Activated B cell treated with CpG ODN at 0.5 μM for 24 hours (primary cell): ENCODE measurements at regions of chr1 and their contacts with region 1.

Region 1: GRCh38 chr1:207336559-207337467 is 15.3 kb downstream of the CD55 start:
- DNase-seq: no peak
- ATAC-seq: peak; percentile 80
- H3K4me3 Mint-ChIP-seq: peak overlapping the region; percentile 73
- H3K27ac Mint-ChIP-seq: peak overlapping the region; percentile 98
- H3K4me1 Mint-ChIP-seq: peaks cover 82% of the 10 kb centered on the region
- H3K27me3 Mint-ChIP-seq: no peaks in the 10 kb centered on the region
- CTCF ChIP-seq: no peak

Region 2: DNA sequence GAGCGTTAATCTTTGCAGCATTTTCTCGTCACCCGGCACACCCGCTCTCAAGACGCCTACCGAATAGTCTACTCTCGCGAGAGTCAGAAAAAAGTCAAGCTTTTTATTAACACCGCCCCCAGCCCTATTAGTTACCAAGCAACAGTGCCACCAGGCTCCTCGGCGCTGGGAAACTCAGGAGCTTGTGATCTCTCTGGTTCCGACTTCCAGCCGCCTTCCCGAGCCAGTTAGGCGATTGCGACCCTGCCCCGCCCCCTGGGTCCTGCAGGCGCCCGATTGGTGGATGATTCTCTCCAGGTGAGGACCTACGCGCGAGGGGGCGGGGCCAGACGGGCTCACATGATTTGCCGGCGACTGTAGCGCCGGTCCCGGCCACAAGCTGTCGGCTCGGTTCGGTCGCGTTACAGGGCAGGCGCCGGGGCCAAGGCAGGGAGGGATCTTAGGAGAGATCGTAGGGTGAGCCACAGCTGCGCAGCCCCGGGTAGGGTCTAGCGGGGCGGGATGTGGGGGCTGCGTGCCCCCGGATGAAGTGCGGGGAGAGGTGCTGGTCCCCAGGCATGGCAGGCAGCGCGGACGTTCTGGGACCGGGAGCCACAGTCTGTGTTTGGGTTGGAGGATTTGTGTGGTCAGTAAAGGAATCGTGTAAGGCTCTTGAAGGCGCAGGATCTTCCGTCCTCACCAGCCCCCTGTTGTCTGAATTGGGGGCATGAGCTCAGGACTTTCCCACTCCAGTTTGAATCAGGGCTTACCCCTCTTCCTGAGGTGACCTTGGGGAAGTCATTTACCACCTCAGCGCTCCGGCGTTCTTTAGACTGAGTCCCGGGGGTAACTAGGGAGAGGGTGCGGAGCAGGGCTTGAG is 283.7 kb before region 1 on chr1 and contains the start of gene PFKFB2:
- CTCF ChIA-PET with region 1: no interaction called
- POLR2A ChIA-PET with region 1: no interaction called
- intact Hi-C with region 1: loop called (anchors 2 kb)
- DNase-seq: peak; percentile 94
- ATAC-seq: peak; percentile 86
- H3K4me3 Mint-ChIP-seq: peak within 1 kb of the TSS; percentile 98
- H3K27ac Mint-ChIP-seq: peak within 1 kb of the TSS; percentile 98
- H3K4me1 Mint-ChIP-seq: peaks cover 56% of the 10 kb centered on the region
- H3K27me3 Mint-ChIP-seq: no peaks in the 10 kb centered on the region
- CTCF ChIP-seq: no peak
- total RNA-seq, gene PFKFB2: 7.6 and 10.1 TPM in 2 replicates

Region 3: GRCh38 chr1:207115269-207115668 is 221.5 kb before region 1 on chr1:
- CTCF ChIA-PET with region 1: no interaction called
- POLR2A ChIA-PET with region 1: no interaction called
- intact Hi-C with region 1: no loop called
- DNase-seq: no peak
- ATAC-seq: no peak
- H3K4me3 Mint-ChIP-seq: no peak overlapping the region
- H3K27ac Mint-ChIP-seq: no peak overlapping the region
- H3K4me1 Mint-ChIP-seq: no peaks in the 10 kb centered on the region
- H3K27me3 Mint-ChIP-seq: peaks cover 2% of the 10 kb centered on the region
- CTCF ChIP-seq: no peak

Region 4: GRCh38 chr1:207309775-207310273 is 27.0 kb before region 1 on chr1:
- CTCF ChIA-PET with region 1: no interaction called
- POLR2A ChIA-PET with region 1: interaction called, 12 read pairs
- intact Hi-C with region 1: no loop called
- DNase-seq: no peak
- ATAC-seq: peak; percentile 67
- H3K4me3 Mint-ChIP-seq: peak overlapping the region; percentile 77
- H3K27ac Mint-ChIP-seq: peak overlapping the region; percentile 91
- H3K4me1 Mint-ChIP-seq: peaks cover 27% of the 10 kb centered on the region
- H3K27me3 Mint-ChIP-seq: no peaks in the 10 kb centered on the region
- CTCF ChIP-seq: no peak

Region 5: DNA sequence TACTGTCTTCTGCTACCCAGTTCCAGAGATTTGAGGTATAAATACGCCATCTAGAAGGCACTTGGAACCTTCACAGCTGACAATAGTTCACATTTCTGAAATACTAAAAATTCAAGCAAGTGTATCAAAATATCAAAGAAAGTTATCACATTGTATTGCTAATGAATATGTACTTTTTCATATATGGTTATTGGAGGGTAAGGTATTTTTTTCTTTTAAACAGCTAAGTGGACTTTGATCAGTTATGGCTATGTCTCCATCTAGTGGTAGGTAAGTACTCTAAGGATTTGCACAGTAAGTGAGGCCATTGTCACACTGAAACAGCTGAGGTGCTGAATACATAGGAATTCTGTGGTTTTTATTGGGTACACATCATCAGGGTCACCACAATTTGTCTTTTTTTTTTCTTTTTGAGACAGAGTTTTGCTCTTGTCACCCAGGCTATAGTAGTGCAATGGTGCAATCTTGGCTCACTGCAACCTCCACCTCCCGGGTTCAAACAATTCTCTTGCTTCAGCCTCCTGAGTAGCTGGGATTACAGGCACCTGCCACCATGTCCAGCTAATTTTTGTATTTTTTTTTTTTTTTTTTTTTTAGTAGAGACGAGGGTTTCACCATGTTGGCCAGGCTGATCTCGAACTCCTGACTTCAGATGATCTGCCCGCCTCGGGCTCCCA is 68.2 kb after region 1 on chr1:
- CTCF ChIA-PET with region 1: interaction called, 10 read pairs
- POLR2A ChIA-PET with region 1: no interaction called
- intact Hi-C with region 1: no loop called
- DNase-seq: no peak
- ATAC-seq: peak; percentile 80
- H3K4me3 Mint-ChIP-seq: no peak overlapping the region
- H3K27ac Mint-ChIP-seq: no peak overlapping the region
- H3K4me1 Mint-ChIP-seq: peaks cover 31% of the 10 kb centered on the region
- H3K27me3 Mint-ChIP-seq: no peaks in the 10 kb centered on the region
- CTCF ChIP-seq: peak; percentile 46

Region 6: DNA sequence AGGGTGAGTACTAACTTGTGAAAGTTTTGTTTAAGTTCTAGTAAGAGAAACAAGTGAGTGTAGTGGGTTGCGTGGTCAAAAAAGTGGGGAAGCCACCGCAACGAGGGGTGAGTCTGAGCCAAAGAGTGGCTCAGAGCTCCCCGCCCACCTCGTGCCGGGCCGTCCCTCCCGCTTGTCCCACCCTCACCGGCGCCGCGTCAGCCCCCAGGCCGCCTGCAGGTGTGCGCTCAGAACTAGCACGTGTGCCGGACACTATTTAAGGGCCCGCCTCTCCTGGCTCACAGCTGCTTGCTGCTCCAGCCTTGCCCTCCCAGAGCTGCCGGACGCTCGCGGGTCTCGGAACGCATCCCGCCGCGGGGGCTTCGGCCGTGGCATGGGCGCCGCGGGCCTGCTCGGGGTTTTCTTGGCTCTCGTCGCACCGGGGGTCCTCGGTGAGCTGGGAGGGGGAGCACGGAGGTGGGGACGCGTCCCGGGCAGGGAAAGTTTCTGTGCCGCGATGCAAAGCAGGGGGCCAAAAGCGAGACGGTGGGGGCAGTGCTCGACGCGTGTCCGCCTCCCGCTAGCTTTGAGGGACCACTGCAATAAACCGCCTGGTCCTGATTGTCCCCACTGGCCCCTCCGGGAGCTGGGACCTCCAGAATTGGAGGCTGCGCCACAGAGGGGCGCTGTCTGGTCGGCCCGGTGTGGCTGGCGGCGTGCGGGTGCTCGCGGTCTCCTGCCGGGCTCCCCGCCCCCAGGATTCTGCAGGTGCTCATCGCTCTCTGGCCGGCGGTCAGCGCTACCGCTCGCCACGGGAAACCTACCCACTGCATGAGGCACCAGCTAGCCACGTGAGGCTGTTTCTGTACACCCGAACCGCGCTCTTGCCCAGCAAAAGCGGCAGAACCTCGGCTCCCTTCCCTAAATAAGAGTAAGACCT is 117.5 kb after region 1 on chr1 and contains the start of gene CR2:
- CTCF ChIA-PET with region 1: interaction called, 4 read pairs
- POLR2A ChIA-PET with region 1: no interaction called
- intact Hi-C with region 1: loop called (anchors 2 kb)
- DNase-seq: peak; percentile 74
- ATAC-seq: peak; percentile 90
- H3K4me3 Mint-ChIP-seq: no peak within 1 kb of the TSS
- H3K27ac Mint-ChIP-seq: no peak within 1 kb of the TSS
- H3K4me1 Mint-ChIP-seq: peaks cover 4% of the 10 kb centered on the region
- H3K27me3 Mint-ChIP-seq: no peaks in the 10 kb centered on the region
- CTCF ChIP-seq: no peak
- total RNA-seq, gene CR2: 30.7 and 34.1 TPM in 2 replicates

Region 7: GRCh38 chr1:207519505-207520404 is 182.9 kb after region 1 on chr1:
- CTCF ChIA-PET with region 1: no interaction called
- POLR2A ChIA-PET with region 1: no interaction called
- intact Hi-C with region 1: no loop called
- DNase-seq: no peak
- ATAC-seq: no peak
- H3K4me3 Mint-ChIP-seq: no peak overlapping the region
- H3K27ac Mint-ChIP-seq: no peak overlapping the region
- H3K4me1 Mint-ChIP-seq: no peaks in the 10 kb centered on the region
- H3K27me3 Mint-ChIP-seq: no peaks in the 10 kb centered on the region
- CTCF ChIP-seq: no peak